ENCODE measurements at regions of chr19 and their contacts with region 1.

Region 1: DNA sequence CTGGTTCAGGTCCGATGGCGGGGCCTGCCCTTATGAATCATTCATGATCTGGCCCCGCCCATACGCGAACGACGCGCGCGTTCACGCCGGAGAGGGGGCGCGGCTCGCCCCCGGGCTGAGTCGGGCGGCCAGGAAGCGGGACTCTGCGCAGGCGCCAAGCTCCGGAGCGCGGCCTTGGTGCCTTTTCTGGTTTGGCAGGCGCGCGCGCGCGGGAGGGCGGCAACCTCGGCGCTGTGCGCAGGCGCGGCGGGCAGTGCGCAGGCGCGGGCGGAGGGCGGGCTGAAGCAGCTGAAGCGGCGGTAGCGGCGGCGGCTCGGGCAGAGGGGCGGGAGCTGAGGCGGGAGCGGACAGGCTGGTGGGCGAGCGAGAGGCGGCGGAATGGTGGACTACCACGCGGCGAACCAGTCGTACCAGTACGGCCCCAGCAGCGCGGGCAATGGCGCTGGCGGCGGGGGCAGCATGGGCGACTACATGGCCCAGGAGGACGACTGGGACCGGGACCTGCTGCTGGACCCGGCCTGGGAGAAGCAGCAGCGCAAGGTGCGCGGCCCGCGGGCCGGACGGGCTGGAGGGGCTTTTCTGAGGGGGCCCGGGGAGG is at the start of gene ACTN4:
- H3K4me3 ChIP-seq: peak within 1 kb of the TSS; percentile 84
- H3K27ac ChIP-seq: peak within 1 kb of the TSS; percentile 96
- H3K4me1 ChIP-seq: peaks cover 37% of the 10 kb centered on the region
- CTCF ChIP-seq: peak; percentile 52; the same call in 1 of the 2 replicates

Region 2: GRCh38 chr19:38544034-38544958 is 103.2 kb before region 1 on chr19:
- CTCF ChIA-PET with region 1: interaction called, 4 read pairs
- POLR2A ChIA-PET with region 1: interaction called, 20 read pairs
- H3K4me3 ChIP-seq: peak overlapping the region; percentile 37
- H3K27ac ChIP-seq: peak overlapping the region; percentile 19
- H3K4me1 ChIP-seq: peaks cover 11% of the 10 kb centered on the region
- CTCF ChIP-seq: peak; percentile 90

Region 3: DNA sequence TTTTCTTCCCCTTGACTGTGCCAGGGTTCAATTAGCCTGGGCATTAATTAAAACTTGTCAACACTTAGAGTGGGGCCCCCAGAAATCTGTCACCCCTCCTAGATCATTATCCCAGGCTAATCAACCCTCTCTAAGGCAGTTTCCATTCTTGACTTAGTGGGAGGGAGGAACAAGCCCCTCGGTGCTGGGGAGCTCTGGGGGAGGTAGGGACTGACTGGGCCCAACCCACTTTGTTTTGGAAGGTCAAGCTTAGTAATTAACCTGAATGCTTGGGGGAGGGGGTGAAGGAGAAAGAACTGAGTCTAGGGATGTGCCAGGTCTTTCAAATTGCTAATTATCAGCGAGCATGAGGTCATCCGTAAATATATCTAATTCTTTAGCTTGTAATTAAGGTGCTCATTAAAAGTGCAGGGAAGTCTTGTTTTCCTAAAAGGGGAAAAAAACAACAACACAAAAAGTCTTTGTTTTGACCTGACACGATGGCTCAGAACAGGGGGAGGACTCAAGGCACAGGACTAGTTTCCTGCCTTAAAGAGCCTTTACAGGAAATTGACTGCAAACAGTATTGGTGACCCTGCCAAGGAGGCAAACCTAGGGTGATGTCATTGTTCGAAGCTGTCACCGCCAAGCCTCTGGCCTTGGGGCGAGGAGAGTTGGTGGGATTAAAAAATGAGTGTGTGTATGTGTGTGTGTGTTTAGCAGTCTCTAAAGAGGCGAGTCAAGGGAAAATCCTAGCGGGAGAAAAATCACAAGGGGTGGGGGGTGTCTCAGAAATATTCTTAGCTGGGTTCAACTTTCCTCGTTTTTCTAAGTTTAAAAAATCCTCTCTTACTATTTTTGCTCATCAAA is 19.4 kb after region 1 on chr19:
- CTCF ChIA-PET with region 1: interaction called, 7 read pairs
- POLR2A ChIA-PET with region 1: interaction called, 122 read pairs
- H3K4me3 ChIP-seq: no peak overlapping the region
- H3K27ac ChIP-seq: peak overlapping the region; percentile 68
- H3K4me1 ChIP-seq: peaks cover 80% of the 10 kb centered on the region
- CTCF ChIP-seq: no peak

Region 4: GRCh38 chr19:38693380-38694223 is 46.1 kb after region 1 on chr19:
- CTCF ChIA-PET with region 1: interaction called, 3 read pairs
- POLR2A ChIA-PET with region 1: interaction called, 23 read pairs
- H3K4me3 ChIP-seq: no peak overlapping the region
- H3K27ac ChIP-seq: no peak overlapping the region
- H3K4me1 ChIP-seq: peaks cover 6% of the 10 kb centered on the region; the same call in 1 of the 2 replicates
- CTCF ChIP-seq: no peak

Region 5: DNA sequence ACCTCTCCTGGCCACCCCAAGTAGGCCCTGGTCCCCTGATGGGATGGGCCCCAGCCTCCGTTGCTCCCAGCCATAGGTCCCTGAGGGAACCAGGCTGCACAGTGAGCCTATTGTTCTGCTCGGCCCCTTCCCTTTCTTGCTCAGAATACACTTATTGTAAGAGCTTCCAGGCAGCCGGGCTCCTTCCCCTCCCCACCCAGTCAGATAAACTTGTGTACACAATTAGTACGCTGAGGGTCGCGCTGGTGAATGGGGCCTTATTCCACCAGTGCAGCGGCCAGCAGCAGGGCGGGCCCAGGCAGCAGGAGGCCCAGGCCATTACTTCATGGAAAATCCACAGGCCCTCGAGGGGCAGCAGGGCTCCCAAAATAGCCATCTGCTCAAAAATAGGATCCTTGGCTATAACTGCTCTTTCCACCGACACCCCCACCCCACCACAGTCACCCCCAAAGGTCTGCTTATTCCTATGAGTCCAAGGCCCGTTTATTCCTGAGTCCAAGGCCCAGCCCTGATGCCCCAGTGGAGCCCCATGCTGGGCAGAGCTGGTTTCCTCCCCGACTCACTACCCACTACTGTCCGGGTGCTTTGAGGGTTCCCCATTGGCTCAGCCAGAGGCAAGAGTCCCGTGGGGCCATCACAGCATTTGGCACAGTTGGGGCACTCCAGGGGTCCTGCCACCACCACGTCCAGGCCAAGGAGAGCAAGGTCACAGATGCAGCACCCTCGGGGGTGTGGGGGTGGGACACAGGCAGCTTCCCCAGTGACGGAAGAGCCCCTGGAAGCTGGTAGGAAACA is 74.7 kb after region 1 on chr19:
- CTCF ChIA-PET with region 1: interaction called, 3 read pairs
- POLR2A ChIA-PET with region 1: interaction called, 46 read pairs
- H3K4me3 ChIP-seq: no peak overlapping the region
- H3K27ac ChIP-seq: peak overlapping the region; percentile 45; the same call in 1 of the 2 replicates
- H3K4me1 ChIP-seq: no peaks in the 10 kb centered on the region
- CTCF ChIP-seq: no peak

Region 6: GRCh38 chr19:38809592-38810252 is 162.3 kb after region 1 on chr19:
- CTCF ChIA-PET with region 1: no interaction called
- POLR2A ChIA-PET with region 1: no interaction called
- H3K4me3 ChIP-seq: no peak overlapping the region
- H3K27ac ChIP-seq: no peak overlapping the region
- H3K4me1 ChIP-seq: no peaks in the 10 kb centered on the region
- CTCF ChIP-seq: no peak

Region 7: DNA sequence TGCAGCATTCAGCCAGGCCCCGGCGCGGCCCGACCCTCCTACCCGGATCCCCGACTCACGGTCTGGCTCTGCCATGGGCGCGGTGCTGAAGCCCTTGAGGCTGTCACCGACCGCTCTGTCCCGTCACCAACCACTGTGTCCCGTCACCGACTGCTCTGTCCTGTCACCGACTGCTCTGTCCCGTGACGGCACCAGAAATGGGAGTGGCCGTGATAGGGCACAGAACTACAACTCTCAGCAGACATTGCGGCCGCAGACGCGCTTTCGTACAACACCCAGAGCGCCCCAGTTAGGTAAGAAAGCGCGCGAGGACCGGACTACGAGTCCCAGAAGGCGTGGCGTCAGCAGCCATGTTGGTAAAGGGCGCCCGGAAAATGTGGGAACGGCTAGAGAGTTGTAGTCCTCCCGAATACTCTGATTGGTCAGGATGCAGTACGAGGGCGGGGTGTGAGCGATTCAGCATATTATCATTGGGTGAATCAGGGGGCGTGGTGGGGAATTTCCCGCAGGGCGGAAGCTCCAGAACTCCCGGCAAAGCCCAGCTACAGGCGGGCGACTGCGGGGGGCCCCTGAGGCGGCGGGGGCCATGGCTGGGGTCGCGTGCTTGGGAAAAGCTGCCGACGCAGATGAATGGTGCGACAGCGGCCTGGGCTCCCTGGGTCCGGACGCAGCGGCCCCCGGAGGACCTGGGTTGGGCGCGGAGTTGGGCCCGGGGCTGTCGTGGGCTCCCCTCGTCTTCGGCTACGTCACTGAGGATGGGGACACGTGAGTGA is 252.2 kb after region 1 on chr19 and contains the starts of genes NFKBIB and SIRT2:
- CTCF ChIA-PET with region 1: no interaction called
- POLR2A ChIA-PET with region 1: interaction called, 12 read pairs
- H3K4me3 ChIP-seq: peak within 1 kb of the TSS; percentile 58
- H3K27ac ChIP-seq: peak within 1 kb of the TSS; percentile 85
- H3K4me1 ChIP-seq: peaks cover 21% of the 10 kb centered on the region
- CTCF ChIP-seq: peak; percentile 59; the same call in 1 of the 2 replicates

Measured in HEK293 (cell line).